Naive thymus-derived CD4-positive, alpha-beta T cell (primary cell): ENCODE measurements at regions of chr15 and their contacts with region 1.

Region 1: GRCh38 chr15:100572362-100572983 is 29.5 kb downstream of the LINS1 start:
- DNase-seq: peak in 6 of 9 donors; percentile 22 to 52 (median 47)
- ATAC-seq: peak; percentile 67
- H3K4me3 ChIP-seq: peak overlapping the region; percentile 5
- H3K4me3 Mint-ChIP-seq: peak overlapping the region; percentile 34 to 86 (median 80)
- H3K27ac ChIP-seq: peak overlapping the region; percentile 65
- H3K27ac Mint-ChIP-seq: peak overlapping the region; percentile 84 to 99 (median 94)
- H3K4me1 ChIP-seq: peaks cover 0 to 36% of the 10 kb centered on the region in 2 donors
- H3K4me1 Mint-ChIP-seq: peaks cover 22 to 83% (median 70%) of the 10 kb centered on the region in 7 donors
- H3K27me3 ChIP-seq: no peaks in the 10 kb centered on the region
- H3K27me3 Mint-ChIP-seq: no peaks in the 10 kb centered on the region

Region 2: GRCh38 chr15:100224206-100225185 is 348.0 kb before region 1 on chr15:
- CTCF ChIA-PET with region 1: no interaction called
- POLR2A ChIA-PET with region 1: no interaction called
- intact Hi-C with region 1: no loop called
- DNase-seq: peak in 4 of 9 donors; percentile 8 to 37 (median 26)
- ATAC-seq: no peak
- H3K4me3 ChIP-seq: no peak overlapping the region
- H3K4me3 Mint-ChIP-seq: peak overlapping the region in 2 of 10 donors; percentile 39 to 54
- H3K27ac ChIP-seq: no peak overlapping the region
- H3K27ac Mint-ChIP-seq: peak overlapping the region in 8 of 9 donors; percentile 5 to 82 (median 56)
- H3K4me1 ChIP-seq: peaks cover 0 to 8% of the 10 kb centered on the region in 2 donors
- H3K4me1 Mint-ChIP-seq: peaks cover 0 to 25% (median 11%) of the 10 kb centered on the region in 7 donors
- H3K27me3 ChIP-seq: no peaks in the 10 kb centered on the region
- H3K27me3 Mint-ChIP-seq: no peaks in the 10 kb centered on the region

Region 3: DNA sequence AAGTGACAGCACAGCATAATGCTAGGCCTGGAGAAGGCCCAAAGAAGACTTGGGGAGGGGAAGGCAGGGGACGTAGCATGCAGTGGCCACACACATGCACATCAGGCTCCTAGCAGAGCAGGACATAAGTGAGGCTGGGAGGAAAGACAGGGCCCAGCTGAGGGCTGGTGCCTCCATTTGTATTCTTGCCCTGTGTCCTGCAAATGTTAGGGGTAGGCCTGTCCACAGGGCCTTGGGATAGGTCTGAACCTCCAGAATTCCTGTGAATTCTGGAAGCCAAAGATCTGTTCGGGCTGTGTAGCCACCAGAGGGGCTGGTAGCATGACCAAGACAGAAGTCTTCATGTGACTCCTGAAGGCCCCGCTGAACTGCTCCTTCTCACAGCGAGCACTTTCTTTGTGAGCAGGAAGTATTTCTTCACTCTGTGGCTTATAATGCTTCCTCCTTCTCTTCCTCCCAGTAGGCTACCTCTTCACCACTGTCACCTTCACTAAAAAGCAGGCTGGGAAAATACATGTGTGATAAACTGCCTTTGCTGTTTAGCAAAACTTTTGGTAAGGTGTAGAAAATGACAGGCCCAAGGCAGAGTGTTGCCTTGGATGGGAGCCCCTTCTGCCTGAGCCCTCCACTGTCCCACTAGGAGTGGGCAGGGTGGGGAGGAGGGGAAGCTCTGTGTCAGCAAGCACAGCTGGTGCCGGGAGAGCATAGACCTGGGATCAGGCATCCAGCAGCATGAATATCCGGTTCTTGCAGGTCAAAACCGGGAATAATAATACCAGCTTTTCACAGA is 52.1 kb before region 1 on chr15:
- CTCF ChIA-PET with region 1: no interaction called
- POLR2A ChIA-PET with region 1: no interaction called
- intact Hi-C with region 1: loop called in 1 of 2 experiments (anchors 1 kb)
- DNase-seq: no peak
- ATAC-seq: peak; percentile 68
- H3K4me3 ChIP-seq: no peak overlapping the region
- H3K4me3 Mint-ChIP-seq: peak overlapping the region; percentile 34 to 77 (median 68)
- H3K27ac ChIP-seq: peak overlapping the region; percentile 1
- H3K27ac Mint-ChIP-seq: peak overlapping the region; percentile 22 to 85 (median 67)
- H3K4me1 ChIP-seq: peaks cover 9 to 19% of the 10 kb centered on the region in 2 donors
- H3K4me1 Mint-ChIP-seq: peaks cover 14 to 40% (median 32%) of the 10 kb centered on the region in 7 donors
- H3K27me3 ChIP-seq: no peaks in the 10 kb centered on the region
- H3K27me3 Mint-ChIP-seq: peaks cover 0 to 7% (median 0%) of the 10 kb centered on the region in 5 donors

Region 4: DNA sequence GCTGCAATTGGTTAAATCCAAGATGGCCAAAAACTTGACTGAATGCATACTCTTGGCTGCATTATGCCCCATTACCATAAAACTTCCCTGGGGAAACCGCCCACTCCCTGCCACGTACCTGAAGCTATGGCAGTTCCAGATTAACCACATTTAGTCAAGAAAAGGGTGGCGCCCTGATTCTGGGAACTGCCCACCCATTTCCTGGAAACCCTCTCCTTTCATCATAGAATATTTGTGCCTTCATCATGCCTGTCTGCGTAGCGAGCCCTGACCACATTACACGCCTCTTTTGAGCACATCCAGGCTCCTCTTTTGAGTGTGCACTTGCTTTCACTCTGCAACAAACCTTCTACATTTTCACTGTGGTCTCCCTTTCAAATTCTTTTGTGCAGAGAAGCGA is 24.3 kb after region 1 on chr15:
- CTCF ChIA-PET with region 1: interaction called, 7 read pairs
- POLR2A ChIA-PET with region 1: interaction called, 35 read pairs
- intact Hi-C with region 1: loop called (anchors 1 to 2 kb)
- DNase-seq: peak; percentile 52 to 97 (median 94)
- ATAC-seq: peak; percentile 93
- H3K4me3 ChIP-seq: peak overlapping the region; percentile 49
- H3K4me3 Mint-ChIP-seq: peak overlapping the region in 7 of 10 donors; percentile 69 to 87 (median 86)
- H3K27ac ChIP-seq: peak overlapping the region; percentile 91
- H3K27ac Mint-ChIP-seq: peak overlapping the region in 4 of 9 donors; percentile 96 to 98 (median 96)
- H3K4me1 ChIP-seq: peaks cover 52 to 82% of the 10 kb centered on the region in 2 donors
- H3K4me1 Mint-ChIP-seq: peaks cover 0 to 78% (median 51%) of the 10 kb centered on the region in 7 donors
- H3K27me3 ChIP-seq: no peaks in the 10 kb centered on the region
- H3K27me3 Mint-ChIP-seq: peaks cover 0 to 2% (median 0%) of the 10 kb centered on the region in 5 donors

Region 5: GRCh38 chr15:100778831-100779288 is 206.4 kb after region 1 on chr15:
- CTCF ChIA-PET with region 1: no interaction called
- POLR2A ChIA-PET with region 1: no interaction called
- intact Hi-C with region 1: no loop called
- DNase-seq: peak in 1 of 9 donors; percentile 4
- ATAC-seq: no peak
- H3K4me3 ChIP-seq: no peak overlapping the region
- H3K4me3 Mint-ChIP-seq: no peak overlapping the region
- H3K27ac ChIP-seq: no peak overlapping the region
- H3K27ac Mint-ChIP-seq: no peak overlapping the region
- H3K4me1 ChIP-seq: no peaks in the 10 kb centered on the region
- H3K4me1 Mint-ChIP-seq: no peaks in the 10 kb centered on the region
- H3K27me3 ChIP-seq: no peaks in the 10 kb centered on the region
- H3K27me3 Mint-ChIP-seq: peaks cover 3 to 22% (median 13%) of the 10 kb centered on the region in 5 donors